A673 (cell line): ENCODE measurements at regions of chr19 and their contacts with region 1.

Region 1: DNA sequence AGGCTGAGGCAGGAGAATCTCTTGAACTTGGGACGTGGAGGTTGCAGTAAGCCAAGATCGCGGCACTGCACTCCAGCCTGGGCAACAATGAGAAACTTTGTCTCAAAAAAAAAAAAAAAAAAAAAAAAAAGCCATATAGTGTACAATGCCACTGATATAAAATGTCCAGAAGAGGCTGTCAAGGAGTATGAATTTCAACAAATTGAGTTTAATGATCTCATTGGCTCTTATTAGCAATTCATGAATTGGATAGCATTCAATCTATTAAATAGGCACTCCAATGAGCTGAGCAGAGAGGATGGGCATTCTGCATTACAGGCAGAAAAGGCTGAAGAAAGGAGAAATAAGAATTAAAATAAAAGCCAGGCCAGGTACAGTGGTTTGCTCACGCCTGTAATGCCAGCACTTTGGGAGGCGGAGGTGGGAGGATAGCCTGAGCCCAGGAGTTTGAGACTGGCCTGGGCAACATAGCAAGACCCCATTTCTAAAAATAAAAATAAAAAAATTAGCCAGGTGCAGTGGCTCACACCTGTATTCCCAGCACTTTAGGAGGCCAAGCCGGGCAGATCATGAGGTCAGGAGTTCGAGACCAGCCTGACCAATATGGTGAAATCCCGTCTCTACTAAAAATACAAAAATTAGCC is 757 bp upstream of the LMNB2 start:
- DNase-seq: no peak
- H3K4me3 ChIP-seq: peak overlapping the region; percentile 100
- H3K27ac ChIP-seq: peak overlapping the region; percentile 75
- H3K4me1 ChIP-seq: peaks cover 25% of the 10 kb centered on the region
- H3K27me3 ChIP-seq: no peaks in the 10 kb centered on the region
- CTCF ChIP-seq: no peak

Region 2: GRCh38 chr19:2269244-2269947 is 188.1 kb before region 1 on chr19:
- CTCF ChIA-PET with region 1: no interaction called
- POLR2A ChIA-PET with region 1: no interaction called
- intact Hi-C with region 1: no loop called
- DNase-seq: peak; percentile 98
- H3K4me3 ChIP-seq: peak overlapping the region; percentile 100
- H3K27ac ChIP-seq: peak overlapping the region; percentile 99
- H3K4me1 ChIP-seq: peaks cover 29% of the 10 kb centered on the region
- H3K27me3 ChIP-seq: no peaks in the 10 kb centered on the region
- CTCF ChIP-seq: no peak

Region 3: DNA sequence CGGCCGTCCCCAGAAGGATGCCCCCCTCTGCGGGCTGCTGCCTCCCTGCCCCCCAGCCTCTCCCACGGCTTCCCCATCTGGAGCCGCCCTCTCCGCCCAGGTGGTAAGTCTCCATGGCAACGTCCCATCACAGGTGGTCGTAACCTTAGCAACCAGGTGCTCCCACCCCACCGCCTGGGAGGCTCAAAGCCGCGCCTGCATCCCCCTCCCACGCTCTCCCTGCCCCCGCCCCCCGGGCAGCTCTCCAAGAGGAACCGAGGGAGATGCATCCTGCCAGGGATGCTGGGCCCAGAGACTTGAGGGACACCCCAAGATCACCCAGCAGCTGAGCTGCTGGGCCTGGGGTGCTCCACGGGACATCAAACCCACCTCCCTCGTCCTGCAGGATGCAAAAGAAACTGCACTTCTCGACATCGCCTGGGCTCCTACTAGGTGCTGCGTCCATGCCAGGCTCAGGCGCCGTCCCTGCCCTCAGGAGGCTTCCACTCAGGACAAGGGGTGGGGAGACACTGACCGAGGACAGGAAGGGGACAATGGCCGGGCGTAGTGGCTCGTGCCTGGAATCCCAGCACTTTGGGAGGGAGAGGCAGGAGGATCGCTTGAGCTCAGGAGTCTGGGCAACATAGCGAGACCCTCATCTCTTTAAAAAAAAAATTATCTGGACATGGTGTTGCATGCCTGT is 144.6 kb before region 1 on chr19:
- CTCF ChIA-PET with region 1: no interaction called
- POLR2A ChIA-PET with region 1: interaction called, 10 read pairs
- intact Hi-C with region 1: no loop called
- DNase-seq: no peak
- H3K4me3 ChIP-seq: no peak overlapping the region
- H3K27ac ChIP-seq: no peak overlapping the region
- H3K4me1 ChIP-seq: no peaks in the 10 kb centered on the region
- H3K27me3 ChIP-seq: no peaks in the 10 kb centered on the region
- CTCF ChIP-seq: no peak

Region 4: DNA sequence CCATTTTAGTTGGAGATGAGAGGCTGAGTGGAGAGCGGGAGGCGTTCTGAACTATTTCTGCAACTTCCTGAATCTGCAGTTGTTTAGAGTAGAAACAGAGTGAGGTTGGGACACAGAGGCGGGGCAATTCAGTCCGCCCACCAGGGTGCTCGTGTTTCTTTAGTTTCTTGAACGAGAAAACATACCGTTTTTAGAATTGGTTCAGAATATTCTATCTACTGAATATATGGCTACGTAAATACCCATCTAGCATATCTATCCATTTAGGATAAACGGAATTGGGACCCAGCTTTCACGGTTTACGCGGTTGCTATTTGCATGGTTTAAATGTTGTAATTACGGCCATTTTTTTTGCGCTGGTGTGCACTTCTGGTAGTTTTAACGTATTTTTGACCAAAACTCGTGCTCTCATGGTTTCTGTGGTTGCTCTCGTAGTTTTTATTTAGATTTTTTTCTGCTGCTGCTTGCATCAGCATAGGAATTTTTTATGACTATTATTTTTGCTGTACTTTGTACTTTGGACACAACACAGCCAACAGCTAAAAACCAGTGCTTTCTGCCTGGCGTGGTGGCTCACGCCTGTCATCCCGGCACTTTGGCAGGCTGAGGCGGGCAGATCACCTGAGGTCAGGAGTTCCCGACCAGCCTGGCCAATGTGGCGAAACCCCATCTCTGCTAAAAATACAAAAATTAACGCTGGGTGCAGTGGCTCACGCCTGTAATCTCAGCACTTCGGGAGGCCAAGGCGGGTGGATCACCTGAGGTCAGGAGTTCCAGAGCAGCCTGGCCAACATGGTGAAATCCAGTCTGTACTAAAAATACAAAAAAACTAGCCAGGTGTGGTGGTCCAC is 62.8 kb before region 1 on chr19:
- CTCF ChIA-PET with region 1: no interaction called
- POLR2A ChIA-PET with region 1: no interaction called
- intact Hi-C with region 1: no loop called
- DNase-seq: no peak
- H3K4me3 ChIP-seq: no peak overlapping the region
- H3K27ac ChIP-seq: no peak overlapping the region
- H3K4me1 ChIP-seq: no peaks in the 10 kb centered on the region
- H3K27me3 ChIP-seq: no peaks in the 10 kb centered on the region
- CTCF ChIP-seq: no peak

Region 5: DNA sequence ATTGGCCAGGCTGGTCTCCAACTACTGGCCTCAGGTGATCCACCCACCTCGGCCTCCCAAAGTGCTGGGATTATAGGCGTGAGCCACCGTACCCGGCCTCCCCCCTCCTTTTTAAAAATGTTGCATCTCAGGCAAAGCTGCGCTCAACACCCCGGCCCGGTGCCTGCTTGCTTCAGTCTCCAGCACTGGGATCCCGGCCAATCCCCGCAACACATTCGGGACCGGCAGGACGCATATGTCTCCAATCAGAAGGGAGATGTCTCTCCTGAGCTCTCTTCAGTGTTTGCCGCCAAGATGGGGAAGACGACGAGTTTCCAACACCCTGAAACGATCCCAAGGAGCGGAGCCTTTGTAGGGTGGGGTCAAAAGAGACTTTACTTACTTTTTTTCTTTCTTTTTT is 228.8 kb after region 1 on chr19:
- CTCF ChIA-PET with region 1: no interaction called
- POLR2A ChIA-PET with region 1: no interaction called
- intact Hi-C with region 1: no loop called
- DNase-seq: no peak
- H3K4me3 ChIP-seq: no peak overlapping the region
- H3K27ac ChIP-seq: no peak overlapping the region
- H3K4me1 ChIP-seq: no peaks in the 10 kb centered on the region
- H3K27me3 ChIP-seq: no peaks in the 10 kb centered on the region
- CTCF ChIP-seq: no peak